ENCODE measurements at regions of chr15 and their contacts with region 1.

Region 1: DNA sequence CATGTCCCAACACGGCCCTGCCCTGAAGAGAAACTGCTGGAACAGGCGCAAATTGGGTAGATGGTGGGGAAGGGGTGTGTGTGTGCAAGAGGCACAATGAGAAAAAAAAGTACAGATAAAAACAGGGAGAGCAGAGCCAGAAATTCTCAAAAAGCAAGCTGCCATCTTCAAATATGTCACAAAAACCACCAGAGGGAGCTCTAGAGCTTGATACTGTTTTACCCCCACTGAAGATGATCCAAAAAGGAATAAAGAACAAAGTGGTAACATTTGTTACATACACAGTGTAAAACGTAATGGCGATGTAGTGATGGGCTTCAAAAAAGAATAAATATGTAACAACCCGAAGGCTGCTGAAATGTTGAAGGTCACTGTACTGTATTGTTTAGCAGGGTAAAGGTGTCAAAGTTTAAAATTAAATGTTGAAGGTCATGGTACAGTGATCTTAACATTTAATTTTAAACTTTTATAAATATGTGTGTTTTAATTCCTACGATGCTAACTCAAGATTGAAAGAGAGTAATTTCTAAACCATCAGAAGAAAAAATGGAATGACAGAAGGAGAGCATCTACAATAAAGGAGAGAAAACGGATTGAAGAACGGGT is 6.0 kb downstream of the SNRPA1 start:
- DNase-seq: peak; percentile 55
- H3K4me3 ChIP-seq: no peak overlapping the region
- H3K27ac ChIP-seq: no peak overlapping the region
- H3K4me1 ChIP-seq: peaks cover 5 to 12% of the 10 kb centered on the region in 2 experiments; a peak in 2 of 4 replicates
- H3K27me3 ChIP-seq: no peaks in the 10 kb centered on the region
- CTCF ChIP-seq: peak; percentile 68
- EP300 ChIP-seq: no peak
- RAD21 ChIP-seq: peak; percentile 61

Region 2: DNA sequence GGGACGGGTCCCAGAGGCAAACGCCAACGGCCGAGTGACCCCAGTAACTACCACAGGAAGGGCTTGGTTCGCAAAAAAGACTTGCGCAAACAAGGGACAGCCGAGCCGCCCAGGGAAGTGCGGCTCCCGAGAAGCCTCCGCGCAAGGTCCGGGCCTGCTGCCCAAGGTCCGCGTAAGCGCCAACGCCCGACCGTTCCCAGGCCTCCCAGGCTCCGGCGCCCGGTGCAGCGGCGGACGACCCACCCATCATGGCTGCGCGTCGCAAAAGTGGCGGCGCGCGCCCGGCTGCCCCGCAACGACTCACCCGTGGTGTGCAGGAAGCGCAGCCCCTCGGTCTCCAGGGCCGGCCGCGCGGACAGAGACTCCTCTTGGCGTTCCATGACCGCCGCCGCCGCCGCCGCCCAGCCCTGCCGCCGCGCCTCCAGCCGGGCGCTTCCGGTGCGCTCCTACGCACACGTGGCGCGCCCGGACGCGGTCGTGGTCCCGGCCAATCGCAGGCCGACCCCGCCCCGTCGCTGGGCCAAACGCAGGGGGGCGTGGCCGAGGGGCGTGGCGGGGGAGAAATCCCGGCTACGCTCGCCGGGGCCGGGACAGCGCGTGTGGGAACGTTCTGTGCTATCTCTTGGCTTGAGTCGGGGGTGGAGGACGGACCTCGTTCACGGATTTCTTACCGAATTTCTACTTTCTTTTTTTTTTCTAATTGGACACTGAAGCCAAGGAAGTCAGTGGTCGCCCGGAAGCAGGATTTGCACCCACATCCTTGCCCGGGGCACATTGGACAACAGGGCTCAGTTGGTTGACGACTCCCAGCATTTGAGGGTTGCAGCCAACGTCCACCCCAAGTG is 11.8 kb before region 1 on chr15 and contains the start of gene SELENOS:
- CTCF ChIA-PET with region 1: interaction called, 13 read pairs
- POLR2A ChIA-PET with region 1: no interaction called
- DNase-seq: peak; percentile 97
- H3K4me3 ChIP-seq: peak within 1 kb of the TSS; percentile 91 to 97
- H3K27ac ChIP-seq: peak within 1 kb of the TSS; percentile 75 to 86
- H3K4me1 ChIP-seq: peaks cover 3 to 32% of the 10 kb centered on the region in 2 experiments; a peak in 2 of 4 replicates
- H3K27me3 ChIP-seq: no peaks in the 10 kb centered on the region
- CTCF ChIP-seq: no peak
- EP300 ChIP-seq: peak in 1 of 2 experiments; percentile 43; a peak in 1 of 4 replicates
- RAD21 ChIP-seq: no peak
- polyA plus RNA-seq, gene SELENOS: 101 and 124 TPM in 2 replicates

Region 3: GRCh38 chr15:101372149-101372577 is 83.2 kb after region 1 on chr15:
- CTCF ChIA-PET with region 1: no interaction called
- POLR2A ChIA-PET with region 1: no interaction called
- DNase-seq: no peak
- H3K4me3 ChIP-seq: no peak overlapping the region
- H3K27ac ChIP-seq: no peak overlapping the region
- H3K4me1 ChIP-seq: peaks cover 0 to 12% of the 10 kb centered on the region in 2 experiments; a peak in 1 of 4 replicates
- H3K27me3 ChIP-seq: no peaks in the 10 kb centered on the region
- CTCF ChIP-seq: no peak
- EP300 ChIP-seq: no peak
- RAD21 ChIP-seq: no peak

Region 4: GRCh38 chr15:101652098-101652782 is 363.2 kb after region 1 on chr15 and contains the start of gene TM2D3:
- CTCF ChIA-PET with region 1: interaction called, 16 read pairs
- POLR2A ChIA-PET with region 1: interaction called, 3 read pairs
- DNase-seq: peak; percentile 98
- H3K4me3 ChIP-seq: peak within 1 kb of the TSS; percentile 88 to 92
- H3K27ac ChIP-seq: peak within 1 kb of the TSS; percentile 90 to 96
- H3K4me1 ChIP-seq: peaks cover 17 to 22% of the 10 kb centered on the region in 2 experiments; a peak in 3 of 4 replicates
- H3K27me3 ChIP-seq: no peaks in the 10 kb centered on the region
- CTCF ChIP-seq: peak; percentile 61
- EP300 ChIP-seq: no peak; a peak in 1 of 4 replicates
- RAD21 ChIP-seq: peak; percentile 32; the same call in 1 of the 2 replicates
- polyA plus RNA-seq, gene TM2D3: 71.6 and 73.3 TPM in 2 replicates